Natural killer cell (primary cell): ENCODE measurements at regions of chr1 and their contacts with region 1.

Region 1: GRCh38 chr1:147700042-147701006 is 30.0 kb upstream of the ACP6 start:
- DNase-seq: peak; percentile 31 to 78
- ATAC-seq: peak; percentile 85 to 97 (median 91)
- H3K4me3 ChIP-seq: no peak overlapping the region
- H3K4me3 Mint-ChIP-seq: no peak overlapping the region
- H3K27ac ChIP-seq: no peak overlapping the region
- H3K27ac Mint-ChIP-seq: peak overlapping the region in 1 of 2 donors; percentile 8
- H3K4me1 ChIP-seq: peaks cover 4% of the 10 kb centered on the region
- H3K4me1 Mint-ChIP-seq: peaks cover 0 to 4% of the 10 kb centered on the region in 2 donors
- H3K27me3 ChIP-seq: peaks cover 3% of the 10 kb centered on the region
- H3K27me3 Mint-ChIP-seq: peaks cover 15 to 18% of the 10 kb centered on the region in 2 donors
- CTCF ChIP-seq: peak; percentile 77

Region 2: DNA sequence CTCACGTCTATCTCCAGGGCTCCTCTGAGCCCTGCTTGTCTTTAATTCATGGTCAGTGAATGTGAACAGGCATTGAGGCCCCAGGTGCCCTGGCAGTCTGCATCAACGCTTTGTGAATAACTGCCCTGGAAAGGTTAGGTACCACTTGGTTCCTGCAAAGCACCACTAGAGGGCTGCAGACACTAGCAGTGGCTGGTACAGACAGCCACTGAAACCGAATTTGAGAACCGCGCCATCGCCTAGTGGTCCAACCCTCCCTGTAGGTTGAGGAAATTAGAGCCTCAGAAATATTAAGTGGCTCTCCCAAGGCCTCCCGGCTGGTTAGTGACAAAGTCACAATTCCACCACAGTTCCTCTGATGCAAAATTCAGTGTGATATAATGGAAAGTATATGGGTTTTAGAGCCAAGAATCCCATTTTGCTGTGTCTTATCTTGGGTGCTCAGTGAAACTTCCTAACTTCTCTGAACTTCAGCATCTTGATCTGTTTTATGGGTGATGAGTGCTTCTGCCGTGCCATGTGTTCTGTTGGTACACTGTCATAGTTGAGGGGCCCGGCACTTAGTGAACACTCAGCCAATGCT is 205.2 kb before region 1 on chr1:
- intact Hi-C with region 1: loop called (anchors 2 kb)
- DNase-seq: peak; percentile 48 to 85
- ATAC-seq: peak; percentile 88 to 100 (median 99)
- H3K4me3 ChIP-seq: no peak overlapping the region
- H3K4me3 Mint-ChIP-seq: no peak overlapping the region
- H3K27ac ChIP-seq: no peak overlapping the region
- H3K27ac Mint-ChIP-seq: no peak overlapping the region
- H3K4me1 ChIP-seq: no peaks in the 10 kb centered on the region
- H3K4me1 Mint-ChIP-seq: no peaks in the 10 kb centered on the region
- H3K27me3 ChIP-seq: no peaks in the 10 kb centered on the region
- H3K27me3 Mint-ChIP-seq: peaks cover 11 to 13% of the 10 kb centered on the region in 2 donors
- CTCF ChIP-seq: peak; percentile 87

Region 3: DNA sequence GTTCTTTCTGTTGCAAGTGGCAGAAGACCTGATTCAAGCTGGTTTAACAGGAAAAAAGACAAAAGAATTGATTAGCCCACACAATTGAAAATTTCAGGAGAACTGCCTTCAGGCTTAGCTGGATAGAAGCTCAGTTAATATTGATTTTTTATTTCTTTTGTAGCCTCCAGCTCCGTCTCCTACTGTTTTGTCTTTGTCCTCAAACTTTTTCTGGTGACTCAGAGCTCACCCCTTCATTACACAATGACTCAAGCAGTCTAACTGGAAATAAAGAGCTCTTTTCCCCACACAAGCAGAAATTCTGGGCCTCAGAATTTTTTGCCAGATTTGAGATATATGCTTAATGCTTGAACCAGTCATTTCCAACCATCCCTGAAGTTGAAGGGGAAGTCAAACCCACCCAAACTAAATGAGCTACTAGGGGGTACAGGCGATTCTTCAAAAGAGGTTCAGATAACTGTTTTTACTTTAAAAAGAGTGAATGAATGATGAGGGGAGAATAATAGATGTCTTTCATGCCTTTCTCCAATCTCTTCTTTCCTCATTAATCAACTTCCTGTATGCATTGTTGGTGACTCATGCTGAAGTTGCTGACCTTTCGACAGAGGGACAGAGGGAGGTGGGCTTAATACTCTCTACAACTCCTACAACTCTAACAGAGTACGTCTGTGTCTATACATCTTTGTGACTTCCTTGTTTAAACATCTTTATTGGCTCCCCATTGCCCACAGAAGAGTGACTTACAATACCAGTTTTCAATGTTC is 23.9 kb before region 1 on chr1:
- intact Hi-C with region 1: no loop called
- DNase-seq: no peak
- ATAC-seq: no peak
- H3K4me3 ChIP-seq: no peak overlapping the region
- H3K4me3 Mint-ChIP-seq: no peak overlapping the region
- H3K27ac ChIP-seq: no peak overlapping the region
- H3K27ac Mint-ChIP-seq: no peak overlapping the region
- H3K4me1 ChIP-seq: no peaks in the 10 kb centered on the region
- H3K4me1 Mint-ChIP-seq: no peaks in the 10 kb centered on the region
- H3K27me3 ChIP-seq: no peaks in the 10 kb centered on the region
- H3K27me3 Mint-ChIP-seq: peaks cover 13 to 19% of the 10 kb centered on the region in 2 donors
- CTCF ChIP-seq: no peak